PC-9 (cell line): ENCODE measurements at regions of chr1 and their contacts with region 1.

Region 1: GRCh38 chr1:96730574-96731298 is 9.2 kb downstream of the PTBP2 start:
- DNase-seq: no peak
- H3K4me3 ChIP-seq: no peak overlapping the region
- H3K27ac ChIP-seq: no peak overlapping the region
- H3K4me1 ChIP-seq: no peaks in the 10 kb centered on the region
- H3K27me3 ChIP-seq: no peaks in the 10 kb centered on the region
- CTCF ChIP-seq: no peak

Region 2: DNA sequence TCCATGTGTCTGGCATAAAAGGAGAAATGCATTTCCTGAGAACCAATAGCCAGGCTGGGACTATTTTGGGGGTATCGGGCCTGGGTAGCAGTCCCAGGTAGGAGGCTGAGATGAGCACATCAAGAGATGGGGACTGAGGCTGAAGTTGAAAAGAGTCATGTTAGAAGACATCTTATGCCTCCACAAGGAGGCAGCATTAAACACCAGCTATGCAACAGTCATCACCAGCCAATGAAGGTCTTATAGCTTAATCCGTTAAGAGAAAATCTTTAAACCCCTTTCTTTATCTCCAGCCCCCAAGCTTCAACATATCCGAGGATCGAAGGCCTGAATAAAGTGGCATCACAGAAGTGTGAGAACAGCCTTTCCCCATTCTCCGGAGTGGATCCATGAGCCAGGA is 649.8 kb before region 1 on chr1:
- CTCF ChIA-PET with region 1: no interaction called
- POLR2A ChIA-PET with region 1: interaction called, 11 read pairs
- intact Hi-C with region 1: no loop called
- DNase-seq: no peak
- H3K4me3 ChIP-seq: no peak overlapping the region
- H3K27ac ChIP-seq: no peak overlapping the region
- H3K4me1 ChIP-seq: no peaks in the 10 kb centered on the region
- H3K27me3 ChIP-seq: no peaks in the 10 kb centered on the region
- CTCF ChIP-seq: no peak

Region 3: GRCh38 chr1:96333522-96334235 is 397.1 kb before region 1 on chr1:
- CTCF ChIA-PET with region 1: no interaction called
- POLR2A ChIA-PET with region 1: no interaction called
- intact Hi-C with region 1: no loop called
- DNase-seq: no peak
- H3K4me3 ChIP-seq: no peak overlapping the region
- H3K27ac ChIP-seq: no peak overlapping the region
- H3K4me1 ChIP-seq: no peaks in the 10 kb centered on the region
- H3K27me3 ChIP-seq: no peaks in the 10 kb centered on the region
- CTCF ChIP-seq: no peak